ENCODE measurements at regions of chr18 and their contacts with region 1.

Region 1: GRCh38 chr18:10519999-10520935 is 5.6 kb upstream of the NAPG start:
- DNase-seq: peak; percentile 47 to 90 (median 82)
- H3K4me3 ChIP-seq: peak overlapping the region in 21 of 59 donors; percentile 1 to 44 (median 26)
- H3K27ac ChIP-seq: peak overlapping the region in 50 of 59 donors; percentile 3 to 91 (median 78)
- H3K27me3 ChIP-seq: no peaks in the 10 kb centered on the region
- CTCF ChIP-seq: peak; percentile 57 to 97 (median 88)

Region 2: GRCh38 chr18:9971313-9971920 is 548.9 kb before region 1 on chr18:
- intact Hi-C with region 1: loop called (anchors 1 to 2 kb)
- DNase-seq: peak in 7 of 10 donors; percentile 56 to 90 (median 76)
- H3K4me3 ChIP-seq: no peak overlapping the region
- H3K27ac ChIP-seq: no peak overlapping the region
- H3K27me3 ChIP-seq: no peaks in the 10 kb centered on the region
- CTCF ChIP-seq: peak; percentile 80 to 98 (median 90)

Region 3: GRCh38 chr18:10006311-10006893 is 513.9 kb before region 1 on chr18:
- intact Hi-C with region 1: loop called (anchors 5 to 10 kb)
- DNase-seq: no peak
- H3K4me3 ChIP-seq: no peak overlapping the region
- H3K27ac ChIP-seq: peak overlapping the region in 3 of 59 donors; percentile 2 to 52 (median 25)
- H3K27me3 ChIP-seq: no peaks in the 10 kb centered on the region
- CTCF ChIP-seq: peak in 51 of 56 donors; percentile 15 to 68 (median 43)

Region 4: DNA sequence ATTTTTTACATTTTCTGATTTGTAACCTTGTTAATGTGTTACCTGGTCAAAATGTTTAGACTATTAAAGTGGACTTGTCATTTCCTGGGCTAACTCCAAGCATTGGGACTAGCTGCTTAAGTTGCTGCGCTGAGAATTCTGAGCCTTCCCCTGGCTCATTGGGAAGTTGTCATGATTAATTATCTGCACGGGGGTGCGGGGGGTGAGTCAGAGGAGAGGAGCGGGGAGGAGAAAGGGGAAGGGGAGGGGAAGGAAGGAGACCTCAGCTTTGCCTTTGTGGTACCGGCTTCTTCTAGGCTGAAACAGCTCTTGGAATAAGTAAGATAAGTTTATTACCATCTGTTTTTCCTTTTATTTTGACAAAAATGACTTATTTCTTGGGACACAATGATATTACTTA is 118.7 kb before region 1 on chr18:
- intact Hi-C with region 1: loop called (anchors 2 kb)
- DNase-seq: no peak
- H3K4me3 ChIP-seq: peak overlapping the region in 2 of 59 donors; percentile 9 to 32
- H3K27ac ChIP-seq: no peak overlapping the region
- H3K27me3 ChIP-seq: peaks cover 0 to 4% (median 0%) of the 10 kb centered on the region in 45 donors
- CTCF ChIP-seq: no peak

Measured in dorsolateral prefrontal cortex (tissue), 120 donors.